Posterior cingulate gyrus (tissue), 11 donors: ENCODE measurements at regions of chr2 and their contacts with region 1.

Region 1: GRCh38 chr2:149799013-149799705 is 211.6 kb upstream of the MMADHC start:
- DNase-seq: no peak

Region 2: GRCh38 chr2:149908726-149909683 is 109.8 kb after region 1 on chr2:
- intact Hi-C with region 1: no loop called
- DNase-seq: no peak

Region 3: DNA sequence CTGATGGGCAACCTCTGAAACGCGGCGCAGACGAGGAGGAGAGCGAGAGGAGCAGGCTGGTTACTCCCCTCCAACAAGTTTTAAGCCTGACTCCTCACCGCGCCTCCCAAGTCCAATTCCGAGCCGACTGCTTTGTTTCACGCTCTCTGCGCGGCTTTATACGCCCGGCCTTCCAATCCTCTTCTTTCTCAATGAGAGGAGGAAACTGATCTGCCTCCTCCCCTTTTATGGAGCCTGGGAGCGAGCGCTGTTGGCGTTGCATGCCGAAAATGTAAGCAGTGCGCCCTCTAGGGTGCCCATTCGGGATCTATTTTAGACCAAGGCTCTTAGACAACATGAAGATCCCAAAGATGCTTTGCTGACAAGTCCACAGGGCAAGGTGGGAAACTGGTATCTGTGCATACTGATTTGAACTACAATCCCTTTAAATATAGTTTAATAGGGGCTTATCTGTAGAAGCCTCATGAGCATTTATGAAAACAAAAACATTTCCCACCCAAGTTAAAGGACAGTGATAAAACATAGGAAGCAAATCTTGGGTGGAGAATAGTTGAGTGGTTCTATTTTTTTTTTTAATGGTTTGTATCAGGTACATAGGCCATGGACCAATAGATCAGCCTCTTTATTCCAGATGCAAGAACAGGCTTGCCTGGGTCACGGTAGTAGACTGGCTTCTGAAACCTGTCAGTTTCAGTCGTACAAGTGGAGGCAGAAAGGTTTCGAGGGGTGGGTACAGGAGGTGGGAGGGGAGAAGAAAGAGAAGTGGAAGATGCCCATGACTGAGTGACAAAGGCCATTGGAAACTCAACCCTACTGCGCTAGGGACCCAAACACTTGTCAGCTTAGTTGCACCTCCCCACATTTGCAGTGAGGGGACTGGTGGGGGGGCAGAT is 688.6 kb after region 1 on chr2 and contains the start of gene RND3:
- intact Hi-C with region 1: loop called (anchors 5 kb)
- DNase-seq: peak; percentile 81 to 98 (median 94)